GM13977 (cell line): ENCODE measurements at regions of chr14 and their contacts with region 1.

Region 1: DNA sequence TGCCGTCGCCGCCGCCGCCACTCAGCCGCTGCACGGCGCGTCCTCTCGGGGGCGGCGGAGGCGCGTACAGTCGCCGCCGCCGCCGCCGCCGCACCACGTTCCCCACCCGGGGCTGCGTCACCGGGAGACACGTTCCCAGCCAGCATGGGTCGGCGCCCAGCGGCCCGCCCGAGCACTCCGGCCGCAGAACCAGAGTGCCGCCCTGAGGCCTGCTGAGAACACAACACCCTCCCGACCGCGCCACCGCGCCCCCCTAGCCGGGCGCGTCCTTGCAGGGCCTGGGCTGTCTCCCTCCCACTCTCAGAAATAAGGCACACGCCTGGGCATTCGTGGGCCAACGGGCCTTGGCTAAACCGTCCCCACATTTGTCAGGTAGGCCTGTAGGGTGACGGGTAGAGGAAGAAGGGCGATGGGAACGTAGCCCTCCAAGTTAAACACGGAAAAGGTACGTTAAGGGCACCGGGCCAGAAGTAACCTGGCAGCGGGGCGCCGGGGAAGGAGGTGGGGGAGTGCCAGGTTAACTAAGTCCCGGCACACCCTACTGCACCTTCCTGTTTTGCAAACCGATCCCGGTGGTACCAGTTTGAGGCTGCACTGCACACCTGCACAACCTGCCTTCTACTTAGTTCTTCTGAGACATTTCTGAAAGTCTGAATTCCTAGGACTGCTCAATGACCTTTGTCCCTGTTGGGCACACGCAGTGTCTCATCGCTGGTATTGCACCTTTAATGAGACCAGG is at the start of gene MAP4K5:
- DNase-seq: peak; percentile 93
- CTCF ChIP-seq: peak; percentile 98

Region 2: GRCh38 chr14:49852301-49853157 is 680.1 kb before region 1 on chr14 and contains the start of gene NEMF:
- in situ Hi-C with region 1: loop called (anchors 25 kb)
- DNase-seq: peak; percentile 73
- CTCF ChIP-seq: peak; percentile 80

Region 3: GRCh38 chr14:50403419-50403818 is 129.3 kb before region 1 on chr14:
- in situ Hi-C with region 1: no loop called
- DNase-seq: no peak
- CTCF ChIP-seq: no peak